Naive thymus-derived CD4-positive, alpha-beta T cell (primary cell): ENCODE measurements at regions of chr7 and their contacts with region 1.

Region 1: DNA sequence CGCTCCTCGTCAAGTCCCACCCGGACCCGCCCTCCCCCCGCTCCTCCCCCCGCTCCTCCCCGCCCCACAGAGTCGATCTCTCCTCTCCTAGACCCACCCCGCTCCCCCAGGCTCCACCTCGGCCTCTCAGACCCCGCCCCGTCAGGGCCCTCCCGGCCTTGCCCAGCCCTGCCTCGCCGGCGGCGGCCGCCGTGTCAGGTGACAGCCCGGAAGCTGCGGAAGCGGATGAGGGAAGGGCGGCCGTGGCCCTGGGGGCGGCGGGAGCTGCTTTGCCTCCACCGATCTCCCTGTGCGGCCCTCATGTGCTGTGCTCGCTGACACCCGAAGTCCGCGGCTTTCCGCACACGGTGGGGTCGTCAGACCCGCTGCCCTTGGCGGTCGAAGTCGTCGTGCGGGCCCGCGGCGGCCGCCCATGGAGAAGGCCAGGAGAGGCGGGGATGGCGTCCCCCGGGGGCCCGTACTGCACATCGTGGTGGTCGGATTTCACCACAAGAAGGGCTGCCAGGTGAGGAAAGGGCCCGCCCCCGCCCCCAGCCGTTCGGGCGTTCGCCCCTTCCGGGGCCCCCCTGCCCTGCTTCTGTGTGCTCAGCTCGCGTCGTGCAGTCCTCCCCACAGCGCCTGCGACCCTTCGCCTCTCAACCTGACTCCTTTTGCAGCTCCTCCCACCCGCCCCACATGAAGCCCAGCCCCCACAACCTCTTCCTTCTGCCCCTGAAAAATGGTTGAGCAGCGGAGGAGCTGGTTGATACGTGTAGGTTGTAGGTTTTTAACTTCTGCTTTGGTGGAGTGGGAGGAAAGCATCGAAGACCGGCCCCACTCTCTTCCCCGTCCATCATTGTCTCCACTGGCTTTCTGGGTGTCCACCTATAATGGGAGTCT is at the start of gene AVL9:
- DNase-seq: peak; percentile 96 to 99 (median 98)
- ATAC-seq: peak; percentile 98
- H3K4me3 ChIP-seq: peak within 1 kb of the TSS; percentile 88
- H3K4me3 Mint-ChIP-seq: peak within 1 kb of the TSS; percentile 86 to 100 (median 96)
- H3K27ac ChIP-seq: peak within 1 kb of the TSS; percentile 96
- H3K27ac Mint-ChIP-seq: peak within 1 kb of the TSS; percentile 92 to 98 (median 97)
- H3K4me1 ChIP-seq: peaks cover 12 to 25% of the 10 kb centered on the region in 2 donors
- H3K4me1 Mint-ChIP-seq: peaks cover 22 to 50% (median 40%) of the 10 kb centered on the region in 7 donors
- H3K27me3 ChIP-seq: no peaks in the 10 kb centered on the region
- H3K27me3 Mint-ChIP-seq: no peaks in the 10 kb centered on the region
- total RNA-seq, gene AVL9: 30.9 to 57.9 (median 45.3) TPM

Region 2: GRCh38 chr7:30594549-30595435 is 1900.7 kb before region 1 on chr7 and contains the start of gene GARS1:
- CTCF ChIA-PET with region 1: no interaction called
- POLR2A ChIA-PET with region 1: no interaction called
- intact Hi-C with region 1: loop called in 1 of 2 experiments (anchors 1 kb)
- DNase-seq: peak; percentile 85 to 92 (median 90)
- ATAC-seq: peak; percentile 91
- H3K4me3 ChIP-seq: peak within 1 kb of the TSS; percentile 62
- H3K4me3 Mint-ChIP-seq: peak within 1 kb of the TSS; percentile 91 to 100 (median 99)
- H3K27ac ChIP-seq: peak within 1 kb of the TSS; percentile 91
- H3K27ac Mint-ChIP-seq: peak within 1 kb of the TSS; percentile 97 to 100 (median 99)
- H3K4me1 ChIP-seq: peaks cover 3 to 22% of the 10 kb centered on the region in 2 donors
- H3K4me1 Mint-ChIP-seq: peaks cover 52 to 88% (median 77%) of the 10 kb centered on the region in 7 donors
- H3K27me3 ChIP-seq: no peaks in the 10 kb centered on the region
- H3K27me3 Mint-ChIP-seq: no peaks in the 10 kb centered on the region
- total RNA-seq, gene GARS1: 73.8 to 143 (median 75.8) TPM

Region 3: DNA sequence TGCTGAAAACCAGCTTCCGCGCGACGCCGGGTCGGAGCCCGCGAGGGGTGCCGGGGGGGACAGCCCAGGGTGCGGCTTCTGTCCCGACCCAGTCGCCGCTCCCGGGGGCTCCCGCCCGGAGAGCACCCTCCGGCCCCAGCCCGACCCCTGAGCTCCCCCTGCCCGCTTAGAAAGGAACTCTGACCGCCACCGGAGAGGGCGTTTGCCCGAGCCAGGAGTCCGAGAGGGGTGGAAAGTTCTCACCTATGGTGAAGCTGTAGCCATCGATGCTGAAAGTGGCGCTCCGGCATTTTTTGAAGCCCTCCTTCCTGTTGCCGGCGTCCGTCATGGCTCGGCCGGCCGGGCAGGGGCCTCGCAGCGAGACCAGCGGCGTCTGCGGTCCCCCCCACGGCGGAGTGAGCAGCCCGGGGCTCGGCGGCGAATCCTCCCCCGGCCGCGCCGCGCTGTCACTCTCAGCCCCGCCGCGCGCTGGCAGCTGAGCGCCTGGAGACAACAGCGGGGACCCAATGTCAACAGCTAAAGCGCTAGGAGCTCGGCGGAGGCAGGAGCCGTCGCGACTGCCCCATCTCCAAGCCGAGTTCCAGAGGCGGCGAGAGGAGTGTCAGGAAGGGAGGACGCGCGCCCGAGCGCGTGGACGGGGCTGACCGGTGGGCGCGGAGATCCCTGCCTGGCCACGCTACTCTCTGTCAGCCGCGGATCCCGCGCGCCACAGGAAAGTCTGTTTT is 197.0 kb before region 1 on chr7:
- CTCF ChIA-PET with region 1: no interaction called
- POLR2A ChIA-PET with region 1: no interaction called
- intact Hi-C with region 1: no loop called
- DNase-seq: no peak
- ATAC-seq: no peak
- H3K4me3 ChIP-seq: no peak overlapping the region
- H3K4me3 Mint-ChIP-seq: peak overlapping the region in 8 of 10 donors; percentile 23 to 62 (median 45)
- H3K27ac ChIP-seq: no peak overlapping the region
- H3K27ac Mint-ChIP-seq: peak overlapping the region in 1 of 9 donors; percentile 30
- H3K4me1 ChIP-seq: no peaks in the 10 kb centered on the region
- H3K4me1 Mint-ChIP-seq: peaks cover 4 to 13% (median 11%) of the 10 kb centered on the region in 7 donors
- H3K27me3 ChIP-seq: no peaks in the 10 kb centered on the region
- H3K27me3 Mint-ChIP-seq: peaks cover 48 to 66% (median 57%) of the 10 kb centered on the region in 5 donors

Region 4: GRCh38 chr7:32533276-32534029 is 37.9 kb after region 1 on chr7:
- CTCF ChIA-PET with region 1: interaction called, 3 read pairs
- POLR2A ChIA-PET with region 1: interaction called, 3 read pairs
- intact Hi-C with region 1: loop called in 1 of 2 experiments (anchors 5 kb)
- DNase-seq: no peak
- ATAC-seq: no peak
- H3K4me3 ChIP-seq: no peak overlapping the region
- H3K4me3 Mint-ChIP-seq: no peak overlapping the region
- H3K27ac ChIP-seq: no peak overlapping the region
- H3K27ac Mint-ChIP-seq: peak overlapping the region in 2 of 9 donors; percentile 49 to 51
- H3K4me1 ChIP-seq: no peaks in the 10 kb centered on the region
- H3K4me1 Mint-ChIP-seq: peaks cover 3 to 64% (median 37%) of the 10 kb centered on the region in 7 donors
- H3K27me3 ChIP-seq: no peaks in the 10 kb centered on the region
- H3K27me3 Mint-ChIP-seq: no peaks in the 10 kb centered on the region

Region 5: DNA sequence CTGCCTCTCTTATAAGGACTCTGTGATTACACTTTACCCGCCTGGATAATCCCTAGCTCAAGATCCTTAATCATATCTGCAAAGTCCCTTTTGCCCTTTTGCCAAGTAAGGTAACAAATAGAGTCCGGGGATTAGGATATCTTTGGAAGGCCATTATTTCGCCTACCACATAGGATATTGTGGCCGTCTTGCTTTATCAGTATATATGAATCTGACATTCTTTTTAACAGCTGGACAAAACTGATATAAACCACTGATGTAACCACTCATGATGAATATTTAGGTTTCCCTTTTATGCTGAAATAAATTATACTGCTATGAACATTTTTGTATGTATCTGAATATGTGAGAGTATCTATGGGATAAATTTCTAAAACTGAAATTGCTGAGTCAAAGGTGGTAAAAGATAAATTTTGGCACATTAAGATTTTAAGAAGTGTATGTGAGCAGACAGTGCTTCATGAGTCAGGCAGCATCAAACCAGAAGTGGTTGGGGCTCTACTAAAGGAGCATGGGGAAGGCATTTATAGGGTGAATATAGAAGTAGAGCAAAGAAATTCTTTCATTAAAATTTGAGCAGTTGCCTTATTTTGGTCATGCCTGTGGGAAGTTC is 44.5 kb after region 1 on chr7:
- CTCF ChIA-PET with region 1: no interaction called
- POLR2A ChIA-PET with region 1: interaction called, 3 read pairs
- intact Hi-C with region 1: loop called in 1 of 2 experiments (anchors 2 kb)
- DNase-seq: no peak
- ATAC-seq: no peak
- H3K4me3 ChIP-seq: no peak overlapping the region
- H3K4me3 Mint-ChIP-seq: peak overlapping the region in 1 of 10 donors; percentile 7
- H3K27ac ChIP-seq: no peak overlapping the region
- H3K27ac Mint-ChIP-seq: peak overlapping the region in 3 of 9 donors; percentile 4 to 55 (median 8)
- H3K4me1 ChIP-seq: no peaks in the 10 kb centered on the region
- H3K4me1 Mint-ChIP-seq: peaks cover 8 to 53% (median 47%) of the 10 kb centered on the region in 7 donors
- H3K27me3 ChIP-seq: no peaks in the 10 kb centered on the region
- H3K27me3 Mint-ChIP-seq: no peaks in the 10 kb centered on the region

Region 6: DNA sequence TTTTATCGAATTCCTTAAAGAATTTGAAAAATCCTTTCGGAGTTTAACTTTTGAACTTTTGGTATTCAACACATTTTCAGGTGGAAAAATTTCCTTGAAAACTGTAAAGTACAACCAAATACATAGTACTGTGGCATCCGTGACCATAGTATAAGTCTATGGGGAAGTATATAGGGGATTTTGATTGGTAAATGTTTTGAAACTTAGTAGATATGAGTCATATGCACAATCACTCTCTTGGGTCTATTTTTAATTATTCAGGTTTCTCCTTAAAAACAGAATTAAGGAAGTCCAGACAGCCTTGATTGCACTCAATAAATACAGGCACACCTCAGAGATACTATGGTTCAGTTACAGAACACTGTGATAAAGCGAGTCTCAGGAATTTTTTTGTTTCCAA is 63.9 kb after region 1 on chr7:
- CTCF ChIA-PET with region 1: no interaction called
- POLR2A ChIA-PET with region 1: interaction called, 3 read pairs
- intact Hi-C with region 1: loop called in 1 of 2 experiments (anchors 5 kb)
- DNase-seq: no peak
- ATAC-seq: no peak
- H3K4me3 ChIP-seq: no peak overlapping the region
- H3K4me3 Mint-ChIP-seq: no peak overlapping the region
- H3K27ac ChIP-seq: no peak overlapping the region
- H3K27ac Mint-ChIP-seq: peak overlapping the region in 1 of 9 donors; percentile 12
- H3K4me1 ChIP-seq: no peaks in the 10 kb centered on the region
- H3K4me1 Mint-ChIP-seq: peaks cover 4 to 13% (median 10%) of the 10 kb centered on the region in 7 donors
- H3K27me3 ChIP-seq: no peaks in the 10 kb centered on the region
- H3K27me3 Mint-ChIP-seq: no peaks in the 10 kb centered on the region

Region 7: GRCh38 chr7:33040803-33041516 is 545.4 kb after region 1 on chr7:
- CTCF ChIA-PET with region 1: no interaction called
- POLR2A ChIA-PET with region 1: interaction called, 3 read pairs
- intact Hi-C with region 1: loop called (anchors 2 to 5 kb)
- DNase-seq: peak in 8 of 9 donors; percentile 44 to 90 (median 78)
- ATAC-seq: peak; percentile 99
- H3K4me3 ChIP-seq: peak overlapping the region; percentile 40
- H3K4me3 Mint-ChIP-seq: peak overlapping the region; percentile 71 to 89 (median 84)
- H3K27ac ChIP-seq: peak overlapping the region; percentile 80
- H3K27ac Mint-ChIP-seq: peak overlapping the region; percentile 75 to 95 (median 90)
- H3K4me1 ChIP-seq: peaks cover 3 to 22% of the 10 kb centered on the region in 2 donors
- H3K4me1 Mint-ChIP-seq: peaks cover 18 to 72% (median 65%) of the 10 kb centered on the region in 7 donors
- H3K27me3 ChIP-seq: no peaks in the 10 kb centered on the region
- H3K27me3 Mint-ChIP-seq: no peaks in the 10 kb centered on the region

Region 8: DNA sequence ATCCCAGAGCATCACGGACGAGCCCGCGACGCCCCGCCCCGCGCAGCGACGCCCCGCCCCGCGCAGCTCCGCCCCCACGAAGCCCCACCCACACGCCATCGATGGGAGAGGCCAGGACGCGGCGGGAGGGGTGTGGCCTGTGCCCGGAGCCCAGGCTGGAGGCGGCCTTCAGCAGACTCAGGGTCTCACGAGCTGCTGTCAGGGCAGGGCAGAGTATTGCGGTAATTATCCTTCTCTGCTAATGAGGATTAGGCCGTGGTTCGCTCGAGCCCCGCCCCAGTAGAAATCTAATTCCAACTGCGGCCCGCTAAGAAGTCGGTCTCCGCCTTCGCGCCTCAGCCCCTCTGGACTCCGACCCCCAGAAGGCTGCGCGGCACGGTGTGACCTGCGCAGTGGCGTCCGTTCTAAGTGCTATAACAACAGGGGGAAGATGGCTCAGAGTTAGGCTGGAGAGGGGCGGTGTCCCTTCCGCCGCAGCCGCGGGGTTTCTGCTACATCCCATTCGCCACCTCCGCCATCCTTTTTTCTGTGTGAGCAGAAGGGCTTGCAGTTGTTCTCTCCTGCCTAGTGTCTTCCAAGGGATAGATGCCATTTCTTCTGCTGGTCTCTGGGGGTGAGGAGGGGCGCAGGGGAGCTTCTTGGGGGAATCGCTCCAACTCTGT is 567.4 kb after region 1 on chr7:
- CTCF ChIA-PET with region 1: no interaction called
- POLR2A ChIA-PET with region 1: interaction called, 10 read pairs
- intact Hi-C with region 1: loop called (anchors 1 kb)
- DNase-seq: peak; percentile 90 to 95 (median 93)
- ATAC-seq: peak; percentile 97
- H3K4me3 ChIP-seq: peak overlapping the region; percentile 96
- H3K4me3 Mint-ChIP-seq: peak overlapping the region; percentile 91 to 98 (median 96)
- H3K27ac ChIP-seq: peak overlapping the region; percentile 82
- H3K27ac Mint-ChIP-seq: peak overlapping the region; percentile 92 to 99 (median 96)
- H3K4me1 ChIP-seq: peaks cover 23 to 32% of the 10 kb centered on the region in 2 donors
- H3K4me1 Mint-ChIP-seq: peaks cover 20 to 50% (median 39%) of the 10 kb centered on the region in 7 donors
- H3K27me3 ChIP-seq: no peaks in the 10 kb centered on the region
- H3K27me3 Mint-ChIP-seq: peaks cover 0 to 14% (median 0%) of the 10 kb centered on the region in 5 donors

Region 9: DNA sequence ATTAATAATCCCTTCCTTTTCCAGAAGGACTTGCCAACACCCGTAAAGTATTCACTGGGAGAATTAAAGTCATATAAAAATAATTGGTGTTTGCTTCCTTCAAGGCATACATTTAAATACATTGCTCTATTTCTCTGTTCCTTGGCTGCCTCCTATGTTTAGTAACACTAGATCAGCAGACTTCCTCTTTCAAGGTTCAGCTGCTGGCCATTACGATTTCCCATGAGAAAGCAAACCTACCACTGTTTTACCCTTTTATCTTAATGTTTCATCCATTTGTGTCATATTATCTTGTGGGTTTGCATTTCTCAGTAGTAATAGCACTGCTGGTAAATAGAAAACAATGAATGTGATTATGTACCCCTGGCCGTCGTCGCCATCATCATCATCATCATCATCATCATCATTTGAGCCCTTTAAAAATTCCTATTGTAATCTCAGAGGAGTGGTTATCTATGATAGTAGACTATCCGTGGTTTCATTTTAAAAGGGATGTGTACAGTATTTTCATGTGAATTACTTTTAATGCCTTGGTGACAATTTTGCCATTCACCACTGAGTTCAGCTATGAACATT is 1096.0 kb after region 1 on chr7:
- CTCF ChIA-PET with region 1: no interaction called
- POLR2A ChIA-PET with region 1: no interaction called
- intact Hi-C with region 1: no loop called
- DNase-seq: no peak
- ATAC-seq: peak; percentile 49
- H3K4me3 ChIP-seq: no peak overlapping the region
- H3K4me3 Mint-ChIP-seq: no peak overlapping the region
- H3K27ac ChIP-seq: no peak overlapping the region
- H3K27ac Mint-ChIP-seq: no peak overlapping the region
- H3K4me1 ChIP-seq: no peaks in the 10 kb centered on the region
- H3K4me1 Mint-ChIP-seq: no peaks in the 10 kb centered on the region
- H3K27me3 ChIP-seq: no peaks in the 10 kb centered on the region
- H3K27me3 Mint-ChIP-seq: no peaks in the 10 kb centered on the region